ENCODE measurements at regions of chr22 and their contacts with region 1.

Region 1: GRCh38 chr22:17628304-17629166 is at the start of gene ATP6V1E1:
- DNase-seq: peak; percentile 90
- H3K4me3 ChIP-seq: peak within 1 kb of the TSS; percentile 100
- H3K27ac ChIP-seq: peak within 1 kb of the TSS; percentile 90
- H3K27me3 ChIP-seq: no peaks in the 10 kb centered on the region
- CTCF ChIP-seq: no peak
- polyA plus RNA-seq, gene ATP6V1E1: 194 and 198 TPM in 2 replicates

Region 2: DNA sequence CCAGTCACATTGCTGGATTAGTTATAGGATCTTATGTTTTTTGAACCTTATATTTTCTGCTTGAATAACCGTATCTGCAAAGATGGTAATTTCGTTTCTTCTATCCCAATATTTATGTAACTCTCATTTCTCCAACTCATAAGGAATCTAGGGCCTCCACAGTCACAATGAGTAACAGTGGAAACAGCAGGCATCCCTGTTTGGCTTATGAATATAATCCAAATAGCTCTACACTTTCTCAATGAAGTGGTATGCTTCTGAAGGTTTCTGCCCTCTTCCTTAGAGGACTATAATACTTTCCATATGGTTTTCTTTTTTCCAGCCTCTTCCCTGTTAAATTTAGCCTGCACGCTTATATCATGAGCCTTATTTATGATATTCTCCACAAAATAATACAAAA is 16.5 kb before region 1 on chr22:
- CTCF ChIA-PET with region 1: no interaction called
- POLR2A ChIA-PET with region 1: interaction called, 14 read pairs
- DNase-seq: no peak
- H3K4me3 ChIP-seq: no peak overlapping the region
- H3K27ac ChIP-seq: no peak overlapping the region
- H3K27me3 ChIP-seq: no peaks in the 10 kb centered on the region
- CTCF ChIP-seq: no peak